Astrocyte of the cerebellum (primary cell): ENCODE measurements at regions of chr12 and their contacts with region 1.

Region 1: GRCh38 chr12:113152835-113153814 is 3.6 kb downstream of the CFAP73 start:
- DNase-seq: peak; percentile 31
- H3K4me3 ChIP-seq: peak overlapping the region; percentile 32
- CTCF ChIP-seq: peak; percentile 52

Region 2: DNA sequence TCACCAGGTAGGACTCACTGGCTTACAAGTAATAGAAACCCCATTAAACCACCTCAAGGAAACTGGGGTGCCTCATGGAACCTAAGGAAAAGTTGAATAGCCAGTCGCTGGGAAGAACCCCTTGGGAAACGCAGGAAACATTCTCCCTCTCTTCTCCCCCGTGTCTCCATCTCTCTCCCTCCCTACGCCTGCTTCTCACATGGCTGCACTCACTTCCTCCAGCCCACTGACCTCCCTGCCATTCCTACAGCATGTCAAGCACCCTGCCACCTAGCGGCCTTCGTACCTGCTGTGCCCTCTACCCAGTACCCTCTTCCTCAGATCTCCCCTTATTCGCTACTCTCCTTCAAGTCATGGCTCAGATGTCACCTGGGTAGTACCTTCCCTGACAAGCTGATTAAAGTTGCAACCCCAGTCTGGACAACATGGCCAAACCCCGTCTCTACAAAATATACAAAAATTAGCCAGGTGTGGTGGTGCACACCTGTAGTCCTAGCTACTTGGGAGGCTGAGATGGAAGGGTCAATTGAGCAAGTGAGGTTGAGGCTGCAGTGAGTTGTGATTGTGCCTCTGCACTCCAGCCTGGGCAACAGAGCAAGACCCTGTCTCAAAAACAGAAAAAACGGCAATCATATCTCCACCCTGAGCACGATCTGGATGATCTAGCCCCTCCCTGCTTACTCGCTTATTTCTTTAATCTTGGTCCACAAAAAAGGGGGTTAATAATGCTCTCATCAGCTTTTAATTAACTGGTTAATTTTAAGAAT is 103.0 kb before region 1 on chr12:
- in situ Hi-C with region 1: loop called (anchors 25 kb)
- DNase-seq: no peak
- H3K4me3 ChIP-seq: no peak overlapping the region
- CTCF ChIP-seq: peak; percentile 41